HEK293T (cell line): ENCODE measurements at regions of chr1 and their contacts with region 1.

Region 1: GRCh38 chr1:37999430-38000232 is 5.7 kb downstream of the FHL3 start:
- DNase-seq: no peak

Region 2: DNA sequence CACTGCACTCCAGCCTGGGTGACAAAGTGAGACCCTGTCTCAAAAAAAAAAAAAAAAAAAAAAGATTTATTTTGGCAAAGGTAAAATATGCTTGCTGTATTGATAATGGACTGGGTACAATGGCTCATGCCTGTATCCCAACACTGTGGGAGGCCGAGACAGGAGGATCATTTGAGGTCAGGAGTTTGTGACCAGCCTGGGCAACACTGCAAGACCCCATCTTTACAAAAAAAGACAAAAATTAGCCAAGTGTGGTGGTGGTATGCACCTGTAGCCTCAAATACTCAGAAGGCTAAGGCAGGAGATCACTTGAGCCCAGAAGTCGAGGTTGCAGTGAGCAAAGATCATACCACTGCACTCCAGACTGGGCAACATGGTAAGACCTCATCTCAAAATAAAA is 16.1 kb before region 1 on chr1:
- CTCF ChIA-PET with region 1: no interaction called
- POLR2A ChIA-PET with region 1: no interaction called
- DNase-seq: no peak

Region 3: GRCh38 chr1:38012363-38013226 is 13.0 kb after region 1 on chr1 and contains the start of gene UTP11:
- CTCF ChIA-PET with region 1: no interaction called
- POLR2A ChIA-PET with region 1: interaction called, 35 read pairs
- DNase-seq: peak; percentile 93

Region 4: DNA sequence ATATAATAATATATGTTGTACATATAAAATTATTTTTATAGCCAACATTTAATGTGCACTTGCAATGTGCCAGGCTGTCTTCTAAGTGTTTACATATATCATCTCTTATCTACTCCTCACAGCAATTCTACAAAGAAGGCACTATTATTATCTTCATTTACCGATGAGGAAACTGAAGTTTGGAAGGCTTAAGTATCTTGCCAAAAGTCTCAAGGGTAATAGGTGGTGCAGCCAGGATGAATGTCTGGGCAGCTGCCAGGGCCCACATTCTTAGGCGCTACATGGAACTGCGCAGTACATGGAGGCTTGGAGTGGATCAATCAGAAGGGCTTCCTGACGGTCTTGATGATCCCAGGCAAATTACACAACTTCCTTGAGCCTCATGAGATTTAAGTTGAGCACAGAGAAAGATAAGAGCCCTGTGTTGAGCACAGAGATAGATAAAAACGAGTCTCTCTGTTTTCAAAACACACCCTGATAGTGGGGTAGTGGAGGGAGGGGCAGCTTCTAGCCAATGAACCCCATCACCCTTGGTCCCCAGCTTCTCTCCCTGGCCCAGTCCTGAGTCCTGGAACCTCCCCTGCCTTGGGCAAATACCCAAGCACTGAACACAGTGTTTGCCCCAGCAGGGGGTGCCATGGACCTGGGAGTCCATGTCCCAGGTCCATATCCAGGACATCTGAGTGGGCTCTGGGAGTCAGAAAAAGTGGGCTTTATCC is 37.7 kb after region 1 on chr1:
- CTCF ChIA-PET with region 1: no interaction called
- POLR2A ChIA-PET with region 1: no interaction called
- DNase-seq: no peak

Region 5: DNA sequence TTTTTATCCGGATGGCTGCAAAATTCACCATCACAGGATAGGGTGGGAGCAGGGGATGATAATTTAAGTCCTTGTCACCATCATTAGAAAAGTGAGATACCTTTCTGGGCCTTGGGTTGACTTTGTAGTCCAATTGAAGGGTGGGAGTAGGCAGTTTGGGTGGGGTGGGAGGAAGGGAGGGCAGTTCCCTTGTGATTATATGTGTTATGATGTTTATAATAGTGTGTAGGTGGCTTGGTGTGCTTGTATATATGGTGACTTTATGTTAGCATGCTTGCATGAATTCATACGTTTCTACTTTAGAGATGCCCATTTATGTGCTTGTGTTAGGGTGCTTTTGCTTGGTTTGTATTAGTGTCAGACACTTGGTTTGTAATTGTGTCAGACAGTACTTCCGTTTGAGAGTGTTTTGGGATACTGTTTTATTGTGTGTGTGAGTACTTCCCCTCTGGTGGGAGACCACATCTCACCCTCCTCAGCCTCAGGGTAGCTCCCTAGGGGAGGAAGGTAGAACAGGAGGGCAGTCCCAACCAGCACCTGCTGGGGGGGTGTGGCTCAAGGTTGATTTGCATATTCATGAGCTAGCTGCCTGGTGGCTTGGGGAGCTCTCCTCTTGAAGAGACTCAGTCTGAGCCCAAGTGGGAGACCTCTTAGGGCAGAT is 53.2 kb after region 1 on chr1:
- CTCF ChIA-PET with region 1: no interaction called
- POLR2A ChIA-PET with region 1: no interaction called
- DNase-seq: no peak

Region 6: DNA sequence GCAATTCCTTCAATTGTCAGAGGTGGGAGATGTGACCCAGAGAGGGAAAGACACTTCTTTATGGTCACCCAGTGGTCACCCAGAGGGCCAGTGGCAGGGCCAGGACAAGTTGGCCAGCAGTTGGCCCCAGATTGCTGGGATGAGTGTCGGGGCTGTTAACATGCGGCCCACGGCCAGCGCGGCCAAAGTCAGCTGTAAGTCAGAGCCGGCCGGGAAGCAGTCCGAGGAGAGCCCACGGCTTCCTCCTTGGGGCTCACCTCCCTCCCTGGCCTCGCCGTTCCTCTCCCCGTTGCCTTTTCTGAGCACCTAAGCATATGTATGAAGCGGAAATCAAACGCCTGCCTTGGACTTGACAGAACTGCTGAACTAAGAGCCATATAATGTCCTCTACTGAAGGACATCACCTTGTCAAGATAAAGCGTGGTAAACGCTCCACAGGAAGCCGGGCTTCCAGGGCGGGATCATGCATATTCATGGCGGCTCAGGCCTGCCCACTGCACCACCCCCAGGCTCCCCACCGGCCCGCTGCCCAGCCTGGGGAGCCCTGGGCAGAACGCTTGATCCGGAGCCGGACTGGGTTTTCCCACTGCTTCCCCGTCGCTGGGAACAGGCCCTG is 292.4 kb after region 1 on chr1:
- CTCF ChIA-PET with region 1: no interaction called
- POLR2A ChIA-PET with region 1: no interaction called
- DNase-seq: no peak